Sciatic nerve (tissue), 2 donors: ENCODE measurements at regions of chr1 and their contacts with region 1.

Region 1: DNA sequence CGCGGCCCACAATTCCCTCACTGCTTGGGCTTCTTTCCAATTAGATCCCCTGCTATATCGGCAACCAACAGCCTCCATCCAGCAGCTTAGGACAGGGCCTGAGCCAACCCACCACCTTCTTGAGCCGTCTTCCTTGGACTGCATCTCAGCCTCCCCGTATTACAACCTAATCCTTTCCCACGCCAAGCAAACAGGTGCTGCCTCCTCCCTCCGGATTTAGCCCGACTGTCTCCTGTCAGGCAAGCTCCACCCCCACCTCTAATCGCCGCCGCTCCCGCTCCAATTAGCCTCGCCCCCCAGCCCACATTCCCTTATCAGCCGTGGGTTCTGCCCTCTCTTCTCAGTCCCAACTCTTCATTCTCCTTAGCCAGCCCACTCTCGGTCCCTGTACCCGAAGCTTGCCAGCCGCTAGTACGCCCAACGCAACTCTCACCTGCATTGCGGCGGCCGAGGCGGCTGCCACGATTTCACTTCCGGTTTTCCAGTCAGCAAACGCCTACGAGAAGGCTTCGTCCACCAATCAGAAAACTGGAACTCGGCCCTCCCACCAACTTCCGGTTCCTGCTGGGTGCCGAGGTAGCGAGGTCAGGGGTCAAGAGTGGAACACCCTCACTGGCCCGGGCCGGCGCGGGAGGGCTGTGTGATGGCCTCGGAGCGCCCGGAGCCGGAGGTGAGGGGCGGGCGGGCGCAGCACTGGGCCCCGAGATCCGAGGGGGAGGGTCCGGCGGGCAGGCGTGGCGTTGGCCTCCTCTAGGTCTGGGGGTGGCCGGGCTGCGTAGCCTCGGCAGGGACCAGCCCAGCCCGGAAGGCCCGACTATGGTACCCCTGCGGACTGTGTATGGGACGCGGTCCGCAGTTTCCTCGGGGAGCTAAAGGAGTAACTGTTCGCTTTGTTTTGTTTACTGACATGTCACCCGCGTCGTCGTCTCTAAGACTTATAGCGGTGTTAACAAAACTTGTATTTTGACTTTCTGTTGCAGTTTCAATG is at the starts of genes MED8 and SZT2:
- DNase-seq: peak; percentile 98
- ATAC-seq: peak; percentile 99
- total RNA-seq, gene MED8: 30.8 TPM
- total RNA-seq, gene SZT2: 86.6 TPM

Region 2: DNA sequence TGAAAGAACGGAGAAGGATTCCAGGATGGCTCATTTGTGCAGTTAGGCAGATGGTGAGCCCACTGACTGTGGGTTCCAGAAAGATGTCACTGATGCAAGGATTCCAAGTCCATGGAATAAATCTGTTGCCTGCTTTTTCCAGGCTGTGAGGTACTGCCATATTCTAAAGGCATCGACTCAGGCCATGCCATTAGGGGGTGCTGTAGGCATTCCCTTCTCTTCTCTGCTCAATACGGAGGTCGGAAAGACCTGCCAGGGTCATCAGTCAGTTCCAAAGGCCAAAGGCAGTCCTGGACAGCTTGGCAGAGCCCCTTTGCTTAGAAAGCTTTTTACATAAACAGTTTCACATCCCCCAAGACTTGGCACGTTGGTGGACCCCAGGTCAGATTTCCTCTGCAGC is 151.5 kb before region 1 on chr1:
- intact Hi-C with region 1: loop called (anchors 10 kb)
- DNase-seq: peak; percentile 75
- ATAC-seq: peak; percentile 83

Region 3: GRCh38 chr1:43529206-43529731 is 139.6 kb after region 1 on chr1:
- intact Hi-C with region 1: no loop called
- DNase-seq: peak; percentile 92
- ATAC-seq: peak; percentile 81